ENCODE measurements at regions of chr11 and their contacts with region 1.

Region 1: GRCh38 chr11:126062679-126063506 is at the start of gene CDON:
- DNase-seq: peak; percentile 92
- H3K4me3 Mint-ChIP-seq: peak within 1 kb of the TSS; percentile 73
- H3K27ac Mint-ChIP-seq: peak within 1 kb of the TSS; percentile 89
- H3K4me1 Mint-ChIP-seq: peaks cover 5% of the 10 kb centered on the region
- H3K27me3 Mint-ChIP-seq: peaks cover 13% of the 10 kb centered on the region
- total RNA-seq, gene CDON: 2.5 to 2.7 TPM

Region 2: DNA sequence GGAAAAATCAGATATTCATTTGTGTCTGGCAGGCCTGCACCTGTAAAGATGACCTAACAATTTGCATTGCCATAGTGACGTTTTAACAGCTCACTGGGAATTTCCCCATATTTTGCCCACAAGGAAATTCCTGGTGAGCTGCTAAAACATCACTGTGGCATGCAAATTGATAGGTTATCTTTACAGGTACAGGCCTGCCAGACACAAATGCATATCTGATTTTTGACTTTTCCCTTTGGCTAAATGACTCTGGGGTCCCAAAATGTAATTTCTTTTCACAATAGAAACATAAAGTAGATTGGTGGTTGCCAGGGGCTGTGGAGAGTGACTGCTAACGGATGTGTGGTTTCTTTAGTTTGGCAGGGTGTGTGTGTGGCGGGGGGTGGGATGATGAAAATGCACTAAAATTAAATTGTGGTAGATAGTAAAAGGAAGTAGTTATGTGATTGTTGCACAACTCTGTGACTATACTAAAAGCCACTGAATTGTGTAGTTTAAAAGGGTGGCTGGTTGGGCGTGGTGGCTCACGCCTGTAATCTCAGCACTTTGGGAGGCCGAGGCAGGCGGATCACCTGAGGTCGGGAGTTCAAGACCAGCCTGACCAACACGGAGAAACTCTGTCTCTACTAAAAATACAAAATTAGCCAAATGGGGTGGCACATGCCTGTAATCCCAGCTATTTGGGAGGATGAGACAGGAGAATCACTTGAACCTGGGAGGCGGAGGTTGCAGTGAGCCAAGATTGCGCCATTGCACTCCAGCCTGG is 548.4 kb before region 1 on chr11:
- CTCF ChIA-PET with region 1: no interaction called
- POLR2A ChIA-PET with region 1: no interaction called
- intact Hi-C with region 1: loop called (anchors 10 kb)
- DNase-seq: peak; percentile 79
- H3K4me3 Mint-ChIP-seq: no peak overlapping the region
- H3K27ac Mint-ChIP-seq: peak overlapping the region; percentile 82
- H3K4me1 Mint-ChIP-seq: peaks cover 25% of the 10 kb centered on the region
- H3K27me3 Mint-ChIP-seq: no peaks in the 10 kb centered on the region

Region 3: GRCh38 chr11:125625630-125626287 is 437.1 kb before region 1 on chr11:
- CTCF ChIA-PET with region 1: no interaction called
- POLR2A ChIA-PET with region 1: no interaction called
- intact Hi-C with region 1: loop called (anchors 2 kb)
- DNase-seq: peak; percentile 92
- H3K4me3 Mint-ChIP-seq: peak overlapping the region; percentile 88
- H3K27ac Mint-ChIP-seq: peak overlapping the region; percentile 93
- H3K4me1 Mint-ChIP-seq: peaks cover 21% of the 10 kb centered on the region
- H3K27me3 Mint-ChIP-seq: no peaks in the 10 kb centered on the region

Region 4: DNA sequence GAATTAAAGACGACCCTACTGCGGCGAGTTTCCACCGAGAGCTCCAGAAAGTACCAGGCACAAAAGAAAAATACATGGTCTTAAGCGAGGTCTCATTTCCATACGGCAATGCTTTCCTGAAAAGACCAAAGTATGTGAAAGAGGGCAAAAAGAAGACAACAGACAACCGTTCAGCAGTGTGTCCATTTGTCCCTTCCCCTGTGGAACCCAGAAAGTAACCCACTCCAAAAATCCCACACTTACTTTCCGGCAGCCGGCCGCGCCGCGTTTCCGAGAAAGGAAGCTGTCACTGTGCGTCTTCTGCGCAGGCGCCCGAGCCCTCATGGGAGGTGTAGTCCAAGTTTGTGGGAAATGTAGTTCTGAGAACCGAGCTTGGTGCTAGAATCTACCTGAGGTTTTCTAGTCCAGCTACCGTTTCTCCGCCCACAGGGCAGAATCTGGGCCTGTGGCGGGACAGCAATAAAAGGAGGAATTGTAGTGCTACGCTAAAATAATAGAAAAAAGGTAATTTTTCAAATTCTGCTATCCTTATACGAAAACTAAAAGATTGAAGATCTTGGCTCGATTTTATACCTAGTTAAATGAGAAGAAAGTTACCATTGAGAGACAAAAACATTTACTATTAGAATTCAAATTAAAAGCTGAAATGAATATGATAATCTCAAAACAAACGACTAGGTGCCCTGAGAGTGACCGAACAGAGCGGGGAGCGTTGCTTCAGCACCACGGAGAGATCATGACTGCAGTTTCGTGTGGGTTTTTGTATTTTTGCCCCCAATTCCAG is 159.8 kb before region 1 on chr11 and contains the start of gene PUS3:
- CTCF ChIA-PET with region 1: no interaction called
- POLR2A ChIA-PET with region 1: no interaction called
- intact Hi-C with region 1: loop called (anchors 2 kb)
- DNase-seq: peak; percentile 93
- H3K4me3 Mint-ChIP-seq: peak within 1 kb of the TSS; percentile 93
- H3K27ac Mint-ChIP-seq: peak within 1 kb of the TSS; percentile 91
- H3K4me1 Mint-ChIP-seq: peaks cover 32% of the 10 kb centered on the region
- H3K27me3 Mint-ChIP-seq: peaks cover 21% of the 10 kb centered on the region
- total RNA-seq, gene PUS3: 20.1 to 22.9 TPM

Region 5: GRCh38 chr11:126083829-126084607 is 21.1 kb after region 1 on chr11:
- CTCF ChIA-PET with region 1: interaction called, 3 read pairs
- POLR2A ChIA-PET with region 1: interaction called, 4 read pairs
- intact Hi-C with region 1: loop called (anchors 1 kb)
- DNase-seq: peak; percentile 58
- H3K4me3 Mint-ChIP-seq: peak overlapping the region; percentile 25
- H3K27ac Mint-ChIP-seq: peak overlapping the region; percentile 58
- H3K4me1 Mint-ChIP-seq: peaks cover 20% of the 10 kb centered on the region
- H3K27me3 Mint-ChIP-seq: no peaks in the 10 kb centered on the region

Region 6: GRCh38 chr11:126268708-126269579 is 206.1 kb after region 1 on chr11 and contains the starts of genes FOXRED1 and SRPRA:
- CTCF ChIA-PET with region 1: no interaction called
- POLR2A ChIA-PET with region 1: interaction called, 3 read pairs
- intact Hi-C with region 1: loop called (anchors 1 kb)
- DNase-seq: peak; percentile 100
- H3K4me3 Mint-ChIP-seq: peak within 1 kb of the TSS; percentile 92
- H3K27ac Mint-ChIP-seq: peak within 1 kb of the TSS; percentile 94
- H3K4me1 Mint-ChIP-seq: peaks cover 33% of the 10 kb centered on the region
- H3K27me3 Mint-ChIP-seq: no peaks in the 10 kb centered on the region
- total RNA-seq, gene FOXRED1: 41.7 to 42.3 TPM
- total RNA-seq, gene SRPRA: 142 to 149 TPM

Measured in activated CD4-positive, alpha-beta memory T cell treated with anti-CD3 and anti-CD28 coated beads for 36 hours (primary cell).